GM18951 (cell line): ENCODE measurements at regions of chr3 and their contacts with region 1.

Region 1: DNA sequence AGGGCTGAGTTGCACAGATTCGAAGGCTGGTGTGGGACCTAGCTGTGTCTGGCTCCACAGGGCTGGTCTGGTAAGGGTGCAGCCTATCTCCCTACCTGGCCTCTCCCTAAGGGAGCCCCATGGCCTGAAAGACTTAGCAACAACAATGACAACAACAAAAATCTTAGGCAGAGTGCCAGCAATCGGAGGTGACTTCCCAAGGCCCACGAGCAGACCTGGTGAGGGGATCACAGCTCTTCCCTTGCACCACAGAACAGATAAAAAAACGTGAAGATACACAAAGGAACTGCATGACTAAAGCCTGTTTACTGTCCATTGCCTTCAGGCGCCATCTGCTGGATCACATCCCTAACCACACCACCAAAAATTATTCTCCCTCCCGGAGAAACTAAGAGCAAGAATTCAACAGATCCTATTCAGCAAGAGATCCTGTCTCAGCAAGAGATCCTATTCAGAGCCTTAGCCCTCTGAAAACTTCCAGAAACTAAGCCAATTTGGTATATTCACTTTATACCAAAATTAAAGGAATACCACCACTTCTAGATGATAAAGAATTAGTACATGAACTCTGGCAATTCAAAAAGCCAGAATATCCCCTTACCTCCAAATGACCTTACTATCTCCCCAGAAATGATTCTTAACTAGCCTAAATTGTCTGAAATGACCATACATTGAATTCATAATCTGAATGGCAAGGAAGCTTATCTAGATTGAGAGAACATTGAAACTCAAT is 24.1 kb upstream of the OR5K4 start:
- POLR2A ChIP-seq: no peak

Region 2: DNA sequence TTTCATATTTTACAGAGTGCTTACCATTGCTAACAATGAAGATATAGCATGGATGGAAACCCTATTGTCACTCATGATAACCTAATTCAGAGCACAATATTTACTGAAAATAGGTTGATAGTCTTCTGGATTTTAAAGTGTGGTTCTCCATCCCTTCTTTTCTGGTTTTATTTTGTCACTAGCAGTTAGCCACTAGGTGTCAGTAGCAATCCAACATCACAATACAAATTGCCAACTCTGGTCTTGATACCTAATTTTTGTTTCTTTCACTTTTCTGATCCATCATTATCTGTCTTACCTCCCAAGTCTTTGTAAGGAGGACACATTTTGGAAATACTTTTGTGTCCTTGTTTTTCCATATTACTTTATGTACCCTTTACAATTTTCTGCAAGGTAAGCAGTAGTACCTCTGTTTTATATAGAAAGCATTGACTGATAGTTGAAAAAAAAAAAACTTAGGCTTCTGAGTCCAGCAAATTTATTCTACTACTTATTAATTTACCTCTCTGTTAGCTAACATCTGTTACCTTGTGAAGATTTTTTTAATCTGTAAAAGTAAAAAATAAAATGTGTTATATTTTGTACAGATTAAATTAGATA is 536.0 kb before region 1 on chr3:
- in situ Hi-C with region 1: loop called (anchors 25 kb)
- POLR2A ChIP-seq: no peak

Region 3: DNA sequence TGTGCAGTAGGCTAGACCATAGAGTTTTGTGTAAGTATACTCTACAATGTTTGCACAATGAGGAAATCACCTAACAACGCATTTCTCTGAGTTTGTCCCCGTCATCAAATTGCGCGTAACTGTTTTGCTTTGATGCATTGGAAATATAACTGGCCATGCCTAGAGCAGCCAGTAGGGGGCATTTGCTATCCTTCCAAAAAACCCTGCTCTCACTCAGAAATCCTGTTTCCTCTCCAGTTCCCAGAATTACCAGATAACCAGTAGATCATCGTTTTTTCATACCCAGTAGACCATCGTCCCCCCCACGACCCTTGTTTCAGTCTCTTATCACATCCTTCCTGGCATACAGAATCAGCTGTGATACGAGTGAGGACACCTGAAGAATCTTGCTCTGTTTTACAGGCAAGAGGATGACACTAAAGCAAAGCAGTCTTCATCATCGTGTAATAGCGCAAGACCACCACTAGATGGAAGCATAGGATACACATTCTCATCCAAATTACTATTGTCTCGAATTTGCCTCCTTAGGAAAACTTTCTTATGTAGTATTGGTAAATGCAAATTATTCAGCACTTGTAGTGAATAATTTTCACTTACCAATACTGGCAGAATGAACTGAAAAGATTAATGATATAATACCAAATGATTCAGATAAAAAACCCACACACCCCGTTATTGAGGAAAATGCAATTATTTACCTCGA is 290.1 kb before region 1 on chr3:
- in situ Hi-C with region 1: loop called (anchors 10 kb)
- POLR2A ChIP-seq: no peak

Region 4: DNA sequence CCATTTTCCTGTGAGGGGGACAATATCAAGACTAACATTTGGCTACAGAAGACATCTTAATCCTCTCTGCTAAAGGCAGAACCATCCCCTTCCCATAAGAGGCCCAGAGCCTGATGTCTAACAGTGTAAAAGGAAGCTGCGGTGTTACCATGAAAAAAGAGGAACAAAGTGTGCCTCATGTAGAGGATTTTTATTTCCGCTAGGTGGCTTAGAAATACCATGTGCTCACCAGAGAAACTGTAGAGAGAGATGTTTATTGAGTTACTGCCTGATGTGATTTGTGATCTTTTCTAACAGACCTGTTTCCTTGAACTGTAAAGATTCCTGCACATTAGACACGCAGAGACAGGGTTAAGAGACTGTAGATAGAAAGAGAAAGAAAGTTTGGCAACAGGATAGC is 141.0 kb before region 1 on chr3:
- in situ Hi-C with region 1: loop called (anchors 10 kb)
- POLR2A ChIP-seq: no peak

Region 5: DNA sequence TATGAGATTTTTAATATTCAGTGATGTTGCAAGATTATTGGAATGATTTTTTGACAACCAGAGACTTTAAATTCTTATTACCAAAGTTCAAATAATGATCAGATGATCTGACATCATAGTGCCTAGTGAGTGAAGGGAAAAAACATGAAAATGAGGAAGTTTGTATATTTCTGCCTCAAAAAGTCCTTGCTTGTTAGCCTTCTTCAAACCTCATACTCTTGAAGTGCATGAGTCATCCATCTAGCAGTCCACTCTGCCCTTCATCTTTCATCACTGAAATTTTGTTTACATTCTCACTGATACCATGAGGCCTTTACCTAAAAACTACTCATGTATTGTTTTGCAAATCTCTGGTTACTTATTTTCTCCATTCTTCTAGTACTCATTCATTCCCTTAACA is 89.4 kb before region 1 on chr3:
- in situ Hi-C with region 1: no loop called
- POLR2A ChIP-seq: no peak

Region 6: GRCh38 chr3:98588065-98588464 is 258.5 kb after region 1 on chr3:
- in situ Hi-C with region 1: loop called (anchors 10 kb)
- POLR2A ChIP-seq: no peak

Region 7: DNA sequence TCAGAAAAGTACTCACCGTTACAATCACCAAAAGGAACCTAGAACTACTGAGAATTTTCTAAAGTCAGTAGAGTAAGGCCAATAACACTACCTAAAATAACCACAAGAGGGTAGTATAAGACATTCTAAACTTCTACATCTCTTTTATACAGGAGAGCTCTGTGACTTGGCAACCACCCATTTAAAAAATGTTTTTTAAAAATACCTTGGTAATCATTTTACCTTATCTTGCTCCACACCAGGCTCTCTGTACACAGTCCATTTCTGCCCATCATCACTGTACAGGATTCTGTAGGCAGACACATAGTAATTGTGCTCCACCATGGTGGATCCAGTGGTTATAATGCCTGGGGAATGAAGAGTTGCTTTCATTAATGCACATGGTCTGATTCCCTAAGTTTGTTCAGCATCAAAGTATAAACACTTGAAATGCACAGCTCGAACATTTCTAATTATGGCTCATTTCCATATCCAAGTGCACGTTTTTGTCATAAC is 488.0 kb after region 1 on chr3:
- in situ Hi-C with region 1: loop called (anchors 10 kb)
- POLR2A ChIP-seq: no peak